ENCODE measurements at regions of chr16 and their contacts with region 1.

Region 1: GRCh38 chr16:89490387-89491237 is at the start of gene ANKRD11:
- DNase-seq: peak; percentile 99
- H3K4me3 Mint-ChIP-seq: peak within 1 kb of the TSS; percentile 84
- H3K27ac Mint-ChIP-seq: peak within 1 kb of the TSS; percentile 93
- H3K4me1 Mint-ChIP-seq: peaks cover 48% of the 10 kb centered on the region
- H3K27me3 Mint-ChIP-seq: no peaks in the 10 kb centered on the region
- total RNA-seq, gene ANKRD11: 126 to 133 TPM

Region 2: DNA sequence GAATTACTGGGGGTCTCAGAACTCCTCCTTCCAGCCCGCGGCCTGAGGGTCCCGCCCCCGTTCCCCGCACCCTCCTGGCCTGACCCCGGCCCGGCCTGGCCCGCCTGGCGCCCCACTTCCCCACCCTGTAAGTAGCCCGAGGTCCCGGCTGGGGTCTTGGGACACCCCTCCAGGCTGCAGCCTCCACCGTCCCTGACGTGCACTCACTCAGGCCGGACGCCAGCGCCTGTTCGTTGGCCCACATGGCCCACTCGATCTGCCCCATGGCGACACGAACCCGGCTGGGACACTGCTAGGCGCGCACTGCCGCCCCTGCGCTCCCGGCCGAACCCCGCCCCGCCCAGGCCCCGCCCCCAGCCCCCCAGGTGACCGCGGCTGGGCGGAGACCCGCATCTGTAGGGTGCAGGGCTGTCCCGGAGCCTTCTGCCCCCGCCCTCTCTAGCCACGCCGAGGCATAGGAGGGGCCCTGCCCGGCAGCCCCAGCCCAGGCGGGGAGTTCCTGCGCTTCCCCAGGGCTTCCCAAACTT is 839.8 kb before region 1 on chr16 and contains the start of gene CYBA:
- CTCF ChIA-PET with region 1: no interaction called
- POLR2A ChIA-PET with region 1: no interaction called
- intact Hi-C with region 1: loop called (anchors 5 kb)
- DNase-seq: peak; percentile 93
- H3K4me3 Mint-ChIP-seq: peak within 1 kb of the TSS; percentile 86
- H3K27ac Mint-ChIP-seq: peak within 1 kb of the TSS; percentile 97
- H3K4me1 Mint-ChIP-seq: peaks cover 14% of the 10 kb centered on the region
- H3K27me3 Mint-ChIP-seq: no peaks in the 10 kb centered on the region
- total RNA-seq, gene CYBA: 262 to 265 TPM

Region 3: GRCh38 chr16:89319883-89320781 is 170.5 kb before region 1 on chr16:
- CTCF ChIA-PET with region 1: interaction called, 4 read pairs
- POLR2A ChIA-PET with region 1: interaction called, 10 read pairs
- intact Hi-C with region 1: loop called (anchors 2 kb)
- DNase-seq: peak; percentile 74
- H3K4me3 Mint-ChIP-seq: peak overlapping the region; percentile 21
- H3K27ac Mint-ChIP-seq: peak overlapping the region; percentile 76
- H3K4me1 Mint-ChIP-seq: peaks cover 96% of the 10 kb centered on the region
- H3K27me3 Mint-ChIP-seq: no peaks in the 10 kb centered on the region

Region 4: GRCh38 chr16:89363621-89364393 is 126.8 kb before region 1 on chr16:
- CTCF ChIA-PET with region 1: no interaction called
- POLR2A ChIA-PET with region 1: interaction called, 4 read pairs
- intact Hi-C with region 1: loop called (anchors 1 kb)
- DNase-seq: peak; percentile 71
- H3K4me3 Mint-ChIP-seq: no peak overlapping the region
- H3K27ac Mint-ChIP-seq: peak overlapping the region; percentile 77
- H3K4me1 Mint-ChIP-seq: peaks cover 91% of the 10 kb centered on the region
- H3K27me3 Mint-ChIP-seq: no peaks in the 10 kb centered on the region

Region 5: GRCh38 chr16:89442990-89443731 is 47.5 kb before region 1 on chr16:
- CTCF ChIA-PET with region 1: no interaction called
- POLR2A ChIA-PET with region 1: no interaction called
- intact Hi-C with region 1: loop called (anchors 5 kb)
- DNase-seq: no peak
- H3K4me3 Mint-ChIP-seq: no peak overlapping the region
- H3K27ac Mint-ChIP-seq: peak overlapping the region; percentile 10
- H3K4me1 Mint-ChIP-seq: peaks cover 93% of the 10 kb centered on the region
- H3K27me3 Mint-ChIP-seq: no peaks in the 10 kb centered on the region

Region 6: DNA sequence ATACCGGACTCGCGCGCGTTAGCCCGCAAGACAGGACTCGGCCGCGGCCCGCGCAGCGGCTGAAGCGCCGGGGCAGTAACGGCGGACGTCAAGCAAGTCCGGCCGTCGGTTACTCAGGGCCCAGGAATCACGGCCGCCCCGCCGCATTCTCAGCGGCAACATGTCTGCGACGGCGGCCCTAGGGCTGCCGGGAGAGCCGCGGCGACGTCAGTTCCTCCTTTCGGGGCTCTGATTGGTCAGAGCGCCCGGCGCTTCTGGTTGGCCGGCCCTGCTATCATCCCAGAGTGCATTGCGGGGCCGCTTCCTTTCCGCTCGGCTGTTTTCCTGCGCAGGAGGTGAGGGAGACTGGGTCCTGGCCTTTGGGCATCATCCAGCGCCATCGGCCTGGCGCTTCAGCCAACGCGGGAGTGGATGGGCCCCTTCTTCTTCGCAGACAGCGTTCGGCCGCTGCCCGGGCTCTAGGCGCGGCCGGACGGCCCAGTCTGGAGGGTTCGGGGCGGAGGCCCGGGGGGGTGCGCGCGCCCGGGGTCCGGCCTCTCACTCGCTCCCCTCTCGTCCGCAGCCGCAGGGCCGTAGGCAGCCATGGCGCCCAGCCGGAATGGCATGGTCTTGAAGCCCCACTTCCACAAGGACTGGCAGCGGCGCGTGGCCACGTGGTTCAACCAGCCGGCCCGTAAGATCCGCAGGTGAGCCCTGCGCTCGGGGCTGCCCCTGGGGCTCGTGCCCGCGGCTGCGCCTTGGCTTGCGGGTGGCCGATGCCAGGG is 69.9 kb after region 1 on chr16 and contains the start of gene RPL13:
- CTCF ChIA-PET with region 1: interaction called, 4 read pairs
- POLR2A ChIA-PET with region 1: no interaction called
- intact Hi-C with region 1: loop called (anchors 5 kb)
- DNase-seq: peak; percentile 96
- H3K4me3 Mint-ChIP-seq: peak within 1 kb of the TSS; percentile 93
- H3K27ac Mint-ChIP-seq: peak within 1 kb of the TSS; percentile 91
- H3K4me1 Mint-ChIP-seq: peaks cover 49% of the 10 kb centered on the region
- H3K27me3 Mint-ChIP-seq: no peaks in the 10 kb centered on the region
- total RNA-seq, gene RPL13: 3,430 to 3,468 TPM